ENCODE measurements at regions of chr19 and their contacts with region 1.

Region 1: GRCh38 chr19:56356944-56357343 is 36.4 kb downstream of the ZNF582 start:
- DNase-seq: no peak
- H3K4me3 ChIP-seq: no peak overlapping the region
- H3K27ac ChIP-seq: no peak overlapping the region
- H3K27me3 ChIP-seq: no peaks in the 10 kb centered on the region
- CTCF ChIP-seq: no peak

Region 2: GRCh38 chr19:56383826-56384605 is 27.1 kb after region 1 on chr19:
- CTCF ChIA-PET with region 1: interaction called, 13 read pairs
- POLR2A ChIA-PET with region 1: no interaction called
- DNase-seq: no peak
- H3K4me3 ChIP-seq: no peak overlapping the region
- H3K27ac ChIP-seq: no peak overlapping the region
- H3K27me3 ChIP-seq: no peaks in the 10 kb centered on the region
- CTCF ChIP-seq: no peak